ENCODE measurements at regions of chr18 and their contacts with region 1.

Region 1: DNA sequence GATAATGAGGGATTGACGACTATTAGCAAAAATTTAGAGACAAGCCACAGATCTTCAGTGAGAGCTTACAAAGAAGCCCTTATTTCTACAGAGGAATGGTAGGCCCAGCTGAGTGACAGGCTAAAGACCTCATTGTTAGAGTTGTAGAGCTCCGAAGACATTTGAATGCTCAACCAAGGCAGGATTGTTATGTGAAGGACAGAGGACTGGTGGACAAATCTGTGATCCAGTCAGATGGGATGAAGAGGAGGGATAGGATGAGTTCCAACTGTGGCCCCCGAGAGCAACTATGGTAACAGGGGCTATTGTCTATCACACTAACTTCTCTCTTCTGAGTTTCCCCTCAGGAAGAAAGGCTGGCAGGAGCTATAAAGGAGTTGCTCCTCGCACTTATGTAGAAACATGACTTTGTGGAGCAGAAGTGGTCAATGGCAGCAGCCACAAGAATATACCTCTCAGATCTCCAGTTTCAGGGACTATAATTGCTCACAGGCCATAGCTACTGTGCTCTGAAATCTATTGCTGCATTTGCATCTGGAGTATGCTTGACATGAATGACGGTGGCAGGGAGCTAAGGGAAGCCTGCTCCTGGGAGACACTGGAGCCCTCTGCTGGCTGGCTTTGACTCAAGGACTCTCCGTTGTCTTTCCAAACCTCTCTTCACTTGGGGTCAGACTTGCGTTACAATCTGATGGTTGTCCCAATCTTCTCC is 50.3 kb upstream of the GREB1L start:
- DNase-seq: no peak
- H3K4me3 ChIP-seq: no peak overlapping the region
- CTCF ChIP-seq: peak; percentile 88

Region 2: GRCh38 chr18:20996418-20996817 is 195.3 kb before region 1 on chr18:
- CTCF ChIA-PET with region 1: no interaction called
- POLR2A ChIA-PET with region 1: no interaction called
- DNase-seq: no peak
- H3K4me3 ChIP-seq: no peak overlapping the region
- CTCF ChIP-seq: no peak

Region 3: GRCh38 chr18:21064347-21064746 is 127.4 kb before region 1 on chr18:
- CTCF ChIA-PET with region 1: no interaction called
- POLR2A ChIA-PET with region 1: no interaction called
- DNase-seq: peak; percentile 29
- H3K4me3 ChIP-seq: no peak overlapping the region
- CTCF ChIP-seq: no peak

Region 4: DNA sequence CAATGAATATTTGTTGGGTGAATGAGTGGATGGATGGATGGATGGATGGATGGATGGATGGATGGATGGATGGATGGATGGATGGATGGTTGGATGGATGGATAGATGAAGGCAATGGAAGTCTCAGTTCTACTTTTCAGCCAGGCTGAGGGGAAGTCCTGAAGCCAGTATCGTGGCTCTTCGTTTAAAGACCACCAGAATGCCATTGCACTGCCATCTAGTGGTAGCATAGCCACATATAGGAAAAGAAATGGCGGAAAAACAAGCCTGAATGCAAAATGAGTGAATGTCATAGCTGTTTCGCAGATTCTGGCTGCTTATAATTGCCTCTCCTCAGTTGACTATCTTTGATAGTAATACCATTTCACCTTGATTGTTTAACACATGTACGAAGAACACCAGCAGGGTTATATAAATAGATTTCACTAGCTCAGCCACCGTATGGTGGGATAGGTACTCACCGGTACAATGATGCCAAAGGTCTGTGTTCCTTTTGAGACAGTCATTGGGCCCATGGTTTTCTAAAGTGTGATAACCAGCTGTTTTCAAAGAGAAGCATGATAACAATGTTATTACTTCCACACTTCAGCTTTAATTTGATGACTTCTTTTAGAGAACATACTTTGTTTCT is 12.0 kb before region 1 on chr18:
- CTCF ChIA-PET with region 1: interaction called, 116 read pairs
- POLR2A ChIA-PET with region 1: no interaction called
- DNase-seq: no peak
- H3K4me3 ChIP-seq: no peak overlapping the region
- CTCF ChIP-seq: peak; percentile 66

Region 5: GRCh38 chr18:21215485-21215884 is 23.7 kb after region 1 on chr18:
- CTCF ChIA-PET with region 1: interaction called, 11 read pairs
- POLR2A ChIA-PET with region 1: no interaction called
- DNase-seq: no peak
- H3K4me3 ChIP-seq: no peak overlapping the region
- CTCF ChIP-seq: no peak

Region 6: GRCh38 chr18:21264651-21265050 is 72.9 kb after region 1 on chr18:
- CTCF ChIA-PET with region 1: no interaction called
- POLR2A ChIA-PET with region 1: no interaction called
- DNase-seq: no peak
- H3K4me3 ChIP-seq: no peak overlapping the region
- CTCF ChIP-seq: no peak

Region 7: GRCh38 chr18:21444465-21445023 is 252.8 kb after region 1 on chr18:
- CTCF ChIA-PET with region 1: interaction called, 190 read pairs
- POLR2A ChIA-PET with region 1: no interaction called
- DNase-seq: no peak
- H3K4me3 ChIP-seq: no peak overlapping the region
- CTCF ChIP-seq: peak; percentile 76

Region 8: DNA sequence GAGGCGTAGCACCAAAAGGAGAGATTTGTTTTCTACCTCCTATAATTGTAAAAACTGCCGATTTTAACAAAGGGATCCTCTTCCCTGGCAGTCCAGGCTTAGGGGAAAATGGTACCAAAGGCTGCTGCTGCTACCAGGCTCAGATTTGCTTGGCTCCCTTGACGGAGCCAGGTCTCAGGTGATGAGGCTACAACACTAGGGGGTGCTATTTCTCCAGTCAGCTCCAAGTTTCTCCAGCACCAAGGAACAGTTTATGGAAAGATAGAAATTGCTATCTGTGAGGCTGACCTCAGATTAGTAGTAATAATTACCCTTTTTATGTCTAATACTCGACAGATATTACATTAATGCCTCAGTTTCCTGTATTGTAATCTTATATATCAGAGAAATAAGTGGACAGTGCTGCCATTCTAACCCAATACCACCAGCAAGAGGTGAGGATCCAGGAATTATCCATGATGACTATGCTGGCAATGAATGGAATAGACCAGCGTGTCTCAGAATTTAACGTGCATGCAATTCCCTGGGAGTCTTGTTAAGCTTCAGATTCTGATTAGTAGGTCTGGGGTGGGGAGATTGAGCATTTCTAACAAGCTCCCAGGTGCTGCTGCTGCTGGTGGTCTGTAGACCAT is 297.5 kb after region 1 on chr18:
- CTCF ChIA-PET with region 1: interaction called, 12 read pairs
- POLR2A ChIA-PET with region 1: no interaction called
- DNase-seq: peak; percentile 9
- H3K4me3 ChIP-seq: no peak overlapping the region
- CTCF ChIP-seq: peak; percentile 68

Region 9: GRCh38 chr18:21955757-21956652 is 764.3 kb after region 1 on chr18:
- CTCF ChIA-PET with region 1: interaction called, 17 read pairs
- POLR2A ChIA-PET with region 1: no interaction called
- DNase-seq: no peak
- H3K4me3 ChIP-seq: no peak overlapping the region
- CTCF ChIP-seq: peak; percentile 92